ENCODE measurements at regions of chr19 and their contacts with region 1.

Region 1: DNA sequence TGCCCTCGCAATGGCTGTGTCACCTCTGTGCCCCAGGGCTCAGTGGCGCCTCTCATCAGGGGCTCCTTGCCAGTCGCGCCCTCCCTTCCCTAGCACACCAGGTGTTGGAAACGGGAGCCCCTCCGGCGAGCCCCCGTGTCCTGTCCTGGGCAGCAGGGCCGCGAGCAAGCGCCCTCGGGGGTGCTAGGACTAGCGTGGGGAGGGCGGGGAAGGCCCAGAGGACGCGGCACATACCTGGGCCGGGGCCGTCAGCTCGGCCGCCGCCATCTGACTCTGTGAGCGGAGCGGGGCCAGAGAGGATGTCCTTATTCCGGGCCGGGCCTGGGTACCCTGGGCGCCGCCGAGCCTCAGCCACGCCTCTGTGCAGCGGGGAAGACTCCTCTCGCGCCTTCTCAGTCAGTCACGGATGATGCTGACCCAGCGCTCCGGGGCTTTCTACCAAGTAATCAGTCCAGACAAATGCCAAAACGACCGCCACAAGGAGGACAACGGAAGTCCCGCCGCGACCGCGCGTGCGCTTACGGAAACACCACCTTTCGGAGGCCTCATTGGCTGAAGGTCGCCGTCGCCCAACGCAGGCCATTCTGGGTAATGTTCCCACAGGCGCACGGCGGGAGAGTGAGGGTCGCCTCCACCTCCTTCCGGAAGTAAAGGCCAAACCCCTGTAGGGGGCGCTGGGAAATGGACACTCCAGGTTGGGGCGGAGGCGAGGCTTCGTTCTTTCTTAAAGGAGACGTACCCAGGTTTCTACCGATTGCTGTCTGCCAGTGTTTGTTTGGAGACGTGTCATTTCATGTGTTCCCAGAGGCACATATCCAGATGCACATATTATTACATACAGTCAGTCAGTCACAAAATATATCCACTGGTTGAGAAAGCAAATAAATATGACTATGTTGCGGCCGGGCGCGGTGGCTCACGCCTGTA is at the start of gene ZNF256:
- DNase-seq: peak; percentile 97
- ATAC-seq: peak; percentile 99
- total RNA-seq, gene ZNF256: 9.3 TPM

Region 2: DNA sequence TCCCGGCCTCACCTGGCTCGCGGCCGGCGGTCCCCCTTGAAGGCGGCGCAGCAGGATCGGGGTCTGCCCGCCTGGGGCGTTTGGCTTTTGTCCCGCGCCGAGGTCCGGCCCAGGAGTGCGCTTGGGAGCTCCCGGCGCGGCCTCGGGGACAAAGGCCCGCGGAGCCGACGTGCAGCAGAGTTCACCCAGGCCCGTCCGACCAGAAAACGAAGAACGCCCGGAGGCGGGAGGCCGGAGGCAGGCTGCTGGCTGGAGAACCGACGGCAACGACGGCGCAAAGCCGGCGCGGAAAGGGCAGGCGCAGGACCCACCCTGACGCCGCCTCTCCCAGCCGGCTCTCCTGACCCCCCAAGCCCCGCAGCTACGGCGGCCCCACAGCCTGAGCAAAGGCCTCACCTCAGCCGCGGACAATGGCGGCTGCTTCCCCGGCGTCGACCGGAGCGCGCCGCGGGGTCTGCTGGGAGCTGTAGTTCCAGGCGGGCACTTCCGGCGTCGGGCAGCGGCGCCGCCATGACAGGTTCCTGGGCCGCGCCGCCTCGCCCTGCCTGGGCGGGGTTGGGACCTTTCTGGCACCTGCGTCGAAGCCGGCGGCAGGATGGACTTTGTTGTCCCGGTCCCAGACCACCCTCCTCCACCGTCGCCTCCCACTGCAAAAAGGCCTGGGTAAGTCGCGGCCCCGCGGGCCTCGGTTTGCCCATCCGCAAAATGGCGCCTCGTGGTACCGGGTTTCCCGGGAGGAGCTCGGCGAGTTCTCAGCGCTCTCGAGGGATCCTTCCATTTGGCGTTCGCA is 55.1 kb after region 1 on chr19 and contains the start of gene ZNF606:
- intact Hi-C with region 1: loop called (anchors 5 kb)
- DNase-seq: peak; percentile 95
- ATAC-seq: peak; percentile 98
- total RNA-seq, gene ZNF606: 11.8 TPM